ENCODE measurements at regions of chr2 and their contacts with region 1.

Region 1: DNA sequence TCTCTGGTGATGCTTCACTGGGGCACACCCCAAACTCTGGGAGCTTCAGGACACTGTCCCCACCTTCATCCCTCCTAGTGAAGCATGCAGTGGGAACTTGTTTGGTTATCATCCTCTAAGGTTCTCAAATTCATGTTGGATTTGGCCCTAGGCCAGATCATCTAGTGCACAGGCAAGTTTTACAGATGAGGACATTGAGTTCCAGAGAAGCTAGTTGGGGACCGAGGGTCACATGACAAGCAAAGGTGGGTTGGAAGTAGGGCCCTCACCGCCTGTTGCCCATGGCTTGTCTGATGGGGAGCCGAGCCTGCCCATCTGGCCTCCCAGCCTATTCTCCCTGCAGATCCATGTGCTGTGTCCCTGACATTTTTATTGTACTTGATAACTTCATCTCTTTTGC is 2.8 kb downstream of the PRKCE start:
- DNase-seq: no peak
- H3K4me3 ChIP-seq: peak overlapping the region in 2 of 3 donors; percentile 45 to 75
- H3K27ac ChIP-seq: no peak overlapping the region
- H3K4me1 ChIP-seq: no peaks in the 10 kb centered on the region
- H3K27me3 ChIP-seq: no peaks in the 10 kb centered on the region
- CTCF ChIP-seq: no peak
- POLR2A ChIP-seq: no peak

Region 2: GRCh38 chr2:45626387-45627221 is 27.6 kb before region 1 on chr2:
- intact Hi-C with region 1: no loop called
- DNase-seq: no peak
- H3K4me3 ChIP-seq: no peak overlapping the region
- H3K27ac ChIP-seq: no peak overlapping the region
- H3K4me1 ChIP-seq: no peaks in the 10 kb centered on the region
- H3K27me3 ChIP-seq: no peaks in the 10 kb centered on the region
- CTCF ChIP-seq: no peak
- POLR2A ChIP-seq: no peak

Region 3: GRCh38 chr2:45714679-45715078 is 60.4 kb after region 1 on chr2:
- intact Hi-C with region 1: loop called (anchors 2 kb)
- DNase-seq: peak in 1 of 2 donors; percentile 80
- H3K4me3 ChIP-seq: no peak overlapping the region
- H3K27ac ChIP-seq: peak overlapping the region; percentile 44 to 46
- H3K4me1 ChIP-seq: no peaks in the 10 kb centered on the region
- H3K27me3 ChIP-seq: no peaks in the 10 kb centered on the region
- CTCF ChIP-seq: no peak
- POLR2A ChIP-seq: no peak

Measured in breast epithelium (tissue), 4 donors.